Right cardiac atrium (tissue), 5 donors: ENCODE measurements at regions of chr10 and their contacts with region 1.

Region 1: GRCh38 chr10:84537447-84537931 is 209.1 kb downstream of the CCSER2 start:
- DNase-seq: peak; percentile 49 to 82 (median 64)
- ATAC-seq: peak; percentile 88
- H3K4me3 ChIP-seq: no peak overlapping the region
- H3K27ac ChIP-seq: no peak overlapping the region
- H3K4me1 ChIP-seq: no peaks in the 10 kb centered on the region
- H3K27me3 ChIP-seq: no peaks in the 10 kb centered on the region

Region 2: DNA sequence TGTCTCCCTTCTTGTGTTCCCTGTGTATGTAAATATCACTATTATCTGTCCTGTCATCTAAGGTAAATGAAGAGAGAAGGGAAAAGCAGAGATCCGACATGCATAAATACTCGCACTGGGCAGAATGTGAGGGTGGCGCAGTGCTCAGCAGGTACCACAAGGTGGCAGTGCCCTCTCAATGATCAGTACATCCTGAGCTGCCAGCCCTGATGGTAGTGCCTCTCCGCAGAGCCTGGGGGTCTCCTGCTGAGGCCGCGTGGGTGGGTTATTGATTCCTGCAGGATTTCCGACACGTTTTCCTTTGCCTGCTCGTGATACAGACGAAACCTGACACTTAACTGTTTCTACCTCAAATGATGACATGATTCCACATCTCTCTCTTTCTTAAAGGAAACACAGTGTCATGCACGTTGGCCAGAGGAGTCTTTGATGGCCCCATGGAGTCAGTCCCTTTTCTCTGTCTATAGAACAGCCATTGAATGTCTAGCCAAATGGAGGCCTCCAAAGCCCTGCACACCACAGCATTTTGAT is 272.8 kb before region 1 on chr10:
- intact Hi-C with region 1: loop called (anchors 2 kb)
- DNase-seq: peak; percentile 61 to 87 (median 76)
- ATAC-seq: peak; percentile 91 to 94
- H3K4me3 ChIP-seq: no peak overlapping the region
- H3K27ac ChIP-seq: no peak overlapping the region
- H3K4me1 ChIP-seq: no peaks in the 10 kb centered on the region
- H3K27me3 ChIP-seq: no peaks in the 10 kb centered on the region

Region 3: DNA sequence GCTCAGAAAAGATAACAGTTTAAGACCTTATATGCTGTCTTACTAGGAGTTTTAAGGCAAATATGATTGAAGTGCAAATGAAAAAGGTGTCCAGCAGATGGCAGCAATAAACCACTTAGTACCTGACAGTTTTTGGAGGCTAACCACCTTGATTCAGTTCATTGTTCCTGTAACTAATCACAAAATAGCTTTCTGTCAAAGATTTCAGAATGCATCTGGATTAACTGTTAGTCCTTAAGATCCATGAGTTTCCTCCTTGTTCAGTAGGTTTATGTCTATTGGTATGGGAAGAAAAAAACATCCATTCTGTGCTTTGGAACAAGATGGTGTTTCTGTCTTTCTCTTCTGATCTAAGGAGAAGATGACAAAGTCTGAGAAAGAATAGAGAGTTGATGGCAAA is 162.5 kb before region 1 on chr10:
- intact Hi-C with region 1: loop called (anchors 2 to 5 kb)
- DNase-seq: no peak
- ATAC-seq: no peak
- H3K4me3 ChIP-seq: no peak overlapping the region
- H3K27ac ChIP-seq: no peak overlapping the region
- H3K4me1 ChIP-seq: no peaks in the 10 kb centered on the region
- H3K27me3 ChIP-seq: no peaks in the 10 kb centered on the region